CD8-positive, alpha-beta T cell (primary cell): ENCODE measurements at regions of chr17 and their contacts with region 1.

Region 1: GRCh38 chr17:29148790-29149430 is 31.3 kb downstream of the MYO18A start:
- DNase-seq: peak; percentile 82 to 95 (median 91)
- ATAC-seq: peak; percentile 97
- H3K4me3 ChIP-seq: peak overlapping the region; percentile 54 to 56
- H3K4me3 Mint-ChIP-seq: peak overlapping the region; percentile 76
- H3K27ac ChIP-seq: peak overlapping the region in 1 of 2 experiments; percentile 88
- H3K27ac Mint-ChIP-seq: peak overlapping the region; percentile 87
- H3K4me1 ChIP-seq: peaks cover 23% of the 10 kb centered on the region
- H3K4me1 Mint-ChIP-seq: peaks cover 33% of the 10 kb centered on the region
- H3K27me3 ChIP-seq: no peaks in the 10 kb centered on the region
- H3K27me3 Mint-ChIP-seq: no peaks in the 10 kb centered on the region
- CTCF ChIP-seq: peak; percentile 98

Region 2: GRCh38 chr17:29133146-29133713 is 15.7 kb before region 1 on chr17:
- CTCF ChIA-PET with region 1: interaction called, 16 read pairs
- POLR2A ChIA-PET with region 1: interaction called, 4 read pairs
- intact Hi-C with region 1: no loop called
- DNase-seq: no peak
- ATAC-seq: no peak
- H3K4me3 ChIP-seq: no peak overlapping the region
- H3K4me3 Mint-ChIP-seq: no peak overlapping the region
- H3K27ac ChIP-seq: no peak overlapping the region
- H3K27ac Mint-ChIP-seq: no peak overlapping the region
- H3K4me1 ChIP-seq: peaks cover 7% of the 10 kb centered on the region
- H3K4me1 Mint-ChIP-seq: peaks cover 39% of the 10 kb centered on the region
- H3K27me3 ChIP-seq: no peaks in the 10 kb centered on the region
- H3K27me3 Mint-ChIP-seq: no peaks in the 10 kb centered on the region
- CTCF ChIP-seq: no peak

Region 3: DNA sequence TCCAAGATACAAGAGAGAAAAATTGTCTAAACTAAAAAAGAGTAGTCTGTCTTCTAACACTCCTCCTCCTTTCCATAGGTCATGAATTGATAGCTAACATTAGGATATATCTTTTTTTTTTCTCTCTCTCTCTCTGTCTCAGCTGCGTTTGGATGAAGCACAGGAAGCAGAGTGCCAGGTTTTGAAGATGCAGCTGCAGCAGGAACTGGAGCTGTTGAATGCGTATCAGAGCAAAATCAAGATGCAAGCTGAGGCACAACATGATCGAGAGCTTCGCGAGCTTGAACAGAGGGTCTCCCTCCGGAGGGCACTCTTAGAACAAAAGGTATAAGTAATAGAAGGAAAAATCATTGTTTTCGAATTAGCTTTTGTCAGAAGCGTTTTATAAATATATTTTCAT is 385.1 kb after region 1 on chr17:
- CTCF ChIA-PET with region 1: no interaction called
- POLR2A ChIA-PET with region 1: no interaction called
- intact Hi-C with region 1: loop called (anchors 5 to 10 kb)
- DNase-seq: no peak
- ATAC-seq: no peak
- H3K4me3 ChIP-seq: no peak overlapping the region
- H3K4me3 Mint-ChIP-seq: no peak overlapping the region
- H3K27ac ChIP-seq: no peak overlapping the region
- H3K27ac Mint-ChIP-seq: no peak overlapping the region
- H3K4me1 ChIP-seq: no peaks in the 10 kb centered on the region
- H3K4me1 Mint-ChIP-seq: no peaks in the 10 kb centered on the region
- H3K27me3 ChIP-seq: no peaks in the 10 kb centered on the region
- H3K27me3 Mint-ChIP-seq: no peaks in the 10 kb centered on the region
- CTCF ChIP-seq: no peak